Caco-2 (cell line): ENCODE measurements at regions of chrX and their contacts with region 1.

Region 1: GRCh38 chrX:151082076-151082948 is 94.1 kb upstream of the GPR50 start:
- DNase-seq: peak; percentile 47 to 70
- H3K4me3 ChIP-seq: peak overlapping the region; percentile 23
- H3K4me3 Mint-ChIP-seq: peak overlapping the region; percentile 47
- H3K27ac Mint-ChIP-seq: no peak overlapping the region
- H3K4me1 ChIP-seq: no peaks in the 10 kb centered on the region
- H3K4me1 Mint-ChIP-seq: no peaks in the 10 kb centered on the region
- H3K27me3 ChIP-seq: no peaks in the 10 kb centered on the region
- H3K27me3 Mint-ChIP-seq: peaks cover 6% of the 10 kb centered on the region
- CTCF ChIP-seq: peak; percentile 71 to 79

Region 2: GRCh38 chrX:150772150-150772970 is 310.0 kb before region 1 on chrX:
- CTCF ChIA-PET with region 1: interaction called, 33 read pairs
- POLR2A ChIA-PET with region 1: no interaction called
- intact Hi-C with region 1: loop called (anchors 1 kb)
- DNase-seq: peak; percentile 67 to 80
- H3K4me3 ChIP-seq: no peak overlapping the region
- H3K4me3 Mint-ChIP-seq: no peak overlapping the region
- H3K27ac Mint-ChIP-seq: no peak overlapping the region
- H3K4me1 ChIP-seq: no peaks in the 10 kb centered on the region
- H3K4me1 Mint-ChIP-seq: no peaks in the 10 kb centered on the region
- H3K27me3 ChIP-seq: no peaks in the 10 kb centered on the region
- H3K27me3 Mint-ChIP-seq: no peaks in the 10 kb centered on the region
- CTCF ChIP-seq: peak; percentile 73 to 83

Region 3: GRCh38 chrX:150982788-150983520 is 99.4 kb before region 1 on chrX and contains the start of gene HMGB3:
- CTCF ChIA-PET with region 1: no interaction called
- POLR2A ChIA-PET with region 1: no interaction called
- intact Hi-C with region 1: loop called (anchors 5 kb)
- DNase-seq: peak; percentile 90 to 93
- H3K4me3 ChIP-seq: peak within 1 kb of the TSS; percentile 69
- H3K4me3 Mint-ChIP-seq: peak within 1 kb of the TSS; percentile 67
- H3K27ac Mint-ChIP-seq: no peak within 1 kb of the TSS
- H3K4me1 ChIP-seq: no peaks in the 10 kb centered on the region
- H3K4me1 Mint-ChIP-seq: no peaks in the 10 kb centered on the region
- H3K27me3 ChIP-seq: no peaks in the 10 kb centered on the region
- H3K27me3 Mint-ChIP-seq: no peaks in the 10 kb centered on the region
- CTCF ChIP-seq: no peak
- total RNA-seq, gene HMGB3: 90.3 and 115 TPM in 2 replicates

Region 4: GRCh38 chrX:151042842-151043241 is 39.5 kb before region 1 on chrX:
- CTCF ChIA-PET with region 1: no interaction called
- POLR2A ChIA-PET with region 1: no interaction called
- intact Hi-C with region 1: no loop called
- DNase-seq: no peak
- H3K4me3 ChIP-seq: no peak overlapping the region
- H3K4me3 Mint-ChIP-seq: no peak overlapping the region
- H3K27ac Mint-ChIP-seq: no peak overlapping the region
- H3K4me1 ChIP-seq: no peaks in the 10 kb centered on the region
- H3K4me1 Mint-ChIP-seq: no peaks in the 10 kb centered on the region
- H3K27me3 ChIP-seq: no peaks in the 10 kb centered on the region
- H3K27me3 Mint-ChIP-seq: peaks cover 3% of the 10 kb centered on the region
- CTCF ChIP-seq: no peak

Region 5: GRCh38 chrX:151206871-151207270 is 124.6 kb after region 1 on chrX:
- CTCF ChIA-PET with region 1: no interaction called
- POLR2A ChIA-PET with region 1: no interaction called
- intact Hi-C with region 1: no loop called
- DNase-seq: no peak
- H3K4me3 ChIP-seq: no peak overlapping the region
- H3K4me3 Mint-ChIP-seq: no peak overlapping the region
- H3K27ac Mint-ChIP-seq: no peak overlapping the region
- H3K4me1 ChIP-seq: no peaks in the 10 kb centered on the region
- H3K4me1 Mint-ChIP-seq: no peaks in the 10 kb centered on the region
- H3K27me3 ChIP-seq: no peaks in the 10 kb centered on the region
- H3K27me3 Mint-ChIP-seq: no peaks in the 10 kb centered on the region
- CTCF ChIP-seq: no peak